GM12878 (cell line): ENCODE measurements at regions of chr10 and their contacts with region 1.

Region 1: GRCh38 chr10:34666008-34666705 is 148.9 kb downstream of the PARD3 start:
- DNase-seq: peak; percentile 53
- ATAC-seq: peak; percentile 91
- H3K4me3 ChIP-seq: no peak overlapping the region
- H3K27ac ChIP-seq: no peak overlapping the region
- H3K4me1 ChIP-seq: no peaks in the 10 kb centered on the region; the same call in 1 of the 2 replicates
- H3K27me3 ChIP-seq: no peaks in the 10 kb centered on the region
- CTCF ChIP-seq: peak; percentile 55 to 72 (median 61); a peak in 5 of 6 replicates
- EP300 ChIP-seq: no peak
- POLR2A ChIP-seq: no peak
- RAD21 ChIP-seq: peak; percentile 72

Region 2: GRCh38 chr10:34585422-34586112 is 80.6 kb before region 1 on chr10:
- CTCF ChIA-PET with region 1: no interaction called
- POLR2A ChIA-PET with region 1: no interaction called
- RAD21 ChIA-PET with region 1: no interaction called
- SMC1A ChIA-PET with region 1: no interaction called
- in situ Hi-C with region 1: no loop called
- intact Hi-C with region 1: no loop called
- DNase-seq: no peak
- ATAC-seq: peak; percentile 87
- H3K4me3 ChIP-seq: no peak overlapping the region
- H3K27ac ChIP-seq: no peak overlapping the region
- H3K4me1 ChIP-seq: no peaks in the 10 kb centered on the region
- H3K27me3 ChIP-seq: no peaks in the 10 kb centered on the region
- CTCF ChIP-seq: no peak
- EP300 ChIP-seq: 0 out of 4 replicates have a peak, but pooled peaks of 1 of the 2 experiments have one; percentile 17
- POLR2A ChIP-seq: no peak
- RAD21 ChIP-seq: no peak

Region 3: DNA sequence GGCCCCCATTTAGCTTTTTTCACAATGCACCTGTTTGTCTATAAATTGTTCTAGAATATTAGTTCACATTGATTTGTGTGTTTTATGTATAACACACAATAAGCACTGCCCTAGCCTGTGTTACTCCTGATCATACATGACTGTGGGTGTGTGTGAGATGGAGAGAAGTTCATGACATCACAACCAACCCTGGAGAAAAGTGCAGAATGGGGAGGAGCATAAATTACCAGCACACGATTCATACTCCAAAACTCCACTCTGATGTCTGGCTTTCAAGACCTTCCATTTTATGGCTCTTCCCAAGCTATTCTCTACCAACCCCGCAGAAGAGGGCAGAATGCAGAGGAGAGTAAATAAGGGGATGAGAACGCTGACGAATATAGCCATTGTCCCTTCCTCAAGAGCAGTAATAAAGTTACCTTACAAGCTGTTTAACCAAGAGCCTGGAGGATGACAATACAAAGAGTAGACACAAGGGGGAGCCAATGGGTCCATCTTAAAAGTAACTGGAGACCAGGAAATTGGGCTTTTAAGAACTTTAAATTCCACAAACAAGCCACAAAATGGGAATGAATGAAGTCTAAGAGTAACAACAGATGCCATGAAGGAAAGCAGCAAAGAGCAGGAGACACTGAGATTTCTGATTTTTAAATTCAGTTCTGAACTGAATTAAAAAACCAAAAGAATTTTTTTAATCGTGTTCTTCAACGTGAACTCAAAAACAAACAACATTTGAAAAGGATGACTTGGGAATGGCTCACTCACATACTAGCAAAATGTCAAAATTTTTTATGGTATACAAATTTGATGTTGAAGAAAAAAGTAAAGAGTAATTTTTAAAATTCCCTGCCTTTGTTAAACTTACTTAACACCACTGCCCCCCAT is 10.6 kb before region 1 on chr10:
- CTCF ChIA-PET with region 1: interaction called, 23 read pairs
- POLR2A ChIA-PET with region 1: no interaction called
- RAD21 ChIA-PET with region 1: interaction called, 3 read pairs
- SMC1A ChIA-PET with region 1: interaction called, 3 read pairs
- in situ Hi-C with region 1: no loop called
- intact Hi-C with region 1: no loop called
- DNase-seq: no peak
- ATAC-seq: peak; percentile 71
- H3K4me3 ChIP-seq: no peak overlapping the region
- H3K27ac ChIP-seq: no peak overlapping the region
- H3K4me1 ChIP-seq: no peaks in the 10 kb centered on the region
- H3K27me3 ChIP-seq: no peaks in the 10 kb centered on the region
- CTCF ChIP-seq: peak; percentile 57 to 70 (median 66)
- EP300 ChIP-seq: no peak
- POLR2A ChIP-seq: no peak
- RAD21 ChIP-seq: peak; percentile 56

Region 4: GRCh38 chr10:34815185-34816084 is 149.3 kb after region 1 on chr10 and contains the start of gene PARD3:
- CTCF ChIA-PET with region 1: interaction called, 6 read pairs
- POLR2A ChIA-PET with region 1: no interaction called
- RAD21 ChIA-PET with region 1: interaction called, 3 read pairs
- SMC1A ChIA-PET with region 1: interaction called, 3 read pairs
- in situ Hi-C with region 1: no loop called
- intact Hi-C with region 1: loop called (anchors 10 kb)
- DNase-seq: no peak
- ATAC-seq: peak; percentile 70
- H3K4me3 ChIP-seq: peak within 1 kb of the TSS; percentile 41; the same call in 1 of the 2 replicates
- H3K27ac ChIP-seq: no peak within 1 kb of the TSS
- H3K4me1 ChIP-seq: no peaks in the 10 kb centered on the region
- H3K27me3 ChIP-seq: peaks cover 0 to 15% of the 10 kb centered on the region in 2 experiments; a peak in 3 of 4 replicates
- CTCF ChIP-seq: no peak
- EP300 ChIP-seq: no peak
- POLR2A ChIP-seq: no peak
- RAD21 ChIP-seq: no peak
- polyA plus RNA-seq, gene PARD3: 6.3 to 9.6 TPM

Region 5: DNA sequence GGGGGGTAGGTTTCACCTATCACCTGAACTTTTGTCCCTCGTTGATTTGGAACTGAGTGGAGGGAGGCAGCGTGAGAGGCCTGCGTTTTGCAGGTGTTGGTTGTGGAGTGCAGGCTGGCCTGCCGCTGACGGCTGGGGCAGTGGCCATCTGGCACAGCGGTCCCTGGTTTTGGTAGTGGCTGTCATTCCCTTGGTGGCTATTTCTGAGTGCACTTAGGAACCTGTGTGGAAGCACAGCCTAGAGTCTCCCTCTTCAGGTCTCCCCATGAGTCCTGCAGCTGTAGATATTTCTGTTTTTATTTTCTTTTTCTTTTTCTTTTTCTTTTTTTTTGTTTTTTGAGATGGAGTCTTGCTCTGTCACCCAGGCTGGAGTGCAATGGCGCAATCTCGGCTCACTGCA is 294.8 kb after region 1 on chr10:
- CTCF ChIA-PET with region 1: interaction called, 10 read pairs
- POLR2A ChIA-PET with region 1: no interaction called
- RAD21 ChIA-PET with region 1: interaction called, 11 read pairs
- SMC1A ChIA-PET with region 1: interaction called, 3 read pairs
- in situ Hi-C with region 1: no loop called
- intact Hi-C with region 1: no loop called
- DNase-seq: no peak
- ATAC-seq: peak; percentile 31; the same call in 1 of the 3 replicates
- H3K4me3 ChIP-seq: no peak overlapping the region
- H3K27ac ChIP-seq: no peak overlapping the region
- H3K4me1 ChIP-seq: no peaks in the 10 kb centered on the region
- H3K27me3 ChIP-seq: no peaks in the 10 kb centered on the region; a peak in 1 of 4 replicates
- CTCF ChIP-seq: peak in 1 of 3 experiments; percentile 28; a peak in 1 of 6 replicates
- EP300 ChIP-seq: no peak
- POLR2A ChIP-seq: no peak
- RAD21 ChIP-seq: peak; percentile 36

Region 6: DNA sequence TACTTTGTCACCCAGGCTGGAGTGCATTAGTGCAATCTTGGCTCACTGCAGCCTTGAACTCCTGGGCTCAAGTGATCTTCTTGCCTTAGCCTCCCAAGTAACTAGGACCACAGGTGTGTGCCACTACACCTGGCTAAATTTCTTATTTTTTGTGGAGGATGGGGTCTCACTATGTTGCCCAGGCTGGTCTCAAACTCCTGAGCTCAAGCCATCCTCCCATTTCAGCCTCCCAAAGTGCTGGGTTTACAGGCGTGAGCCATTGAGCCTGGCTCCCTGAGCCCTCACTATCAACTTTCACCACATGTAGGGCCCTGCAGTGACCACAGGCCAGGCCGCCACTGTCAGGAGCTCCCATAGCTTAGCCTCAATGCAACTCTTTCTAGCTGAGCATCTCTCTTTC is 313.8 kb after region 1 on chr10:
- CTCF ChIA-PET with region 1: no interaction called
- POLR2A ChIA-PET with region 1: no interaction called
- RAD21 ChIA-PET with region 1: no interaction called
- SMC1A ChIA-PET with region 1: interaction called, 5 read pairs
- in situ Hi-C with region 1: no loop called
- intact Hi-C with region 1: loop called (anchors 5 kb)
- DNase-seq: no peak
- ATAC-seq: no peak
- H3K4me3 ChIP-seq: no peak overlapping the region
- H3K27ac ChIP-seq: no peak overlapping the region
- H3K4me1 ChIP-seq: no peaks in the 10 kb centered on the region
- H3K27me3 ChIP-seq: no peaks in the 10 kb centered on the region
- CTCF ChIP-seq: no peak
- EP300 ChIP-seq: no peak
- POLR2A ChIP-seq: no peak
- RAD21 ChIP-seq: no peak

Region 7: DNA sequence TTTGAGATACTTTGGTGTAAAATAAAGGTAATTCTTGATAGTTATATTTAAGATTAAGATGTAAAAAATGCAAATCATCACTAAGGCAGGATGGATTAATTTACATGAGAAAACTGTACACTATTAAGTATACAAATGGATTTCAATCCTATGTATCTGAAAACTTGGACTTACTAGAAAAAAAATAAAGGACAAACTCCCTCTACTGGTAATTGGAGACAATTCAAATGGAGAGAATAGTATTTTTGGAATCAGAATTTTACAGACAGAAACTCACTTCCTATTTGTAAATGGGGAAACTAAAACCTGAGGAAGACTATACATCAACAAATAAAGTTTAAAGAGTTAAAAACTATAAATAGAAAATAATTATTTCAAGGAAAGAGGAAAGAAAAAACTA is 361.4 kb after region 1 on chr10:
- CTCF ChIA-PET with region 1: interaction called, 13 read pairs
- POLR2A ChIA-PET with region 1: no interaction called
- RAD21 ChIA-PET with region 1: interaction called, 3 read pairs
- SMC1A ChIA-PET with region 1: interaction called, 6 read pairs
- in situ Hi-C with region 1: no loop called
- intact Hi-C with region 1: loop called (anchors 5 kb)
- DNase-seq: no peak
- ATAC-seq: no peak
- H3K4me3 ChIP-seq: no peak overlapping the region
- H3K27ac ChIP-seq: no peak overlapping the region
- H3K4me1 ChIP-seq: no peaks in the 10 kb centered on the region
- H3K27me3 ChIP-seq: no peaks in the 10 kb centered on the region
- CTCF ChIP-seq: no peak; a peak in 2 of 6 replicates
- EP300 ChIP-seq: no peak
- POLR2A ChIP-seq: no peak
- RAD21 ChIP-seq: no peak

Region 8: DNA sequence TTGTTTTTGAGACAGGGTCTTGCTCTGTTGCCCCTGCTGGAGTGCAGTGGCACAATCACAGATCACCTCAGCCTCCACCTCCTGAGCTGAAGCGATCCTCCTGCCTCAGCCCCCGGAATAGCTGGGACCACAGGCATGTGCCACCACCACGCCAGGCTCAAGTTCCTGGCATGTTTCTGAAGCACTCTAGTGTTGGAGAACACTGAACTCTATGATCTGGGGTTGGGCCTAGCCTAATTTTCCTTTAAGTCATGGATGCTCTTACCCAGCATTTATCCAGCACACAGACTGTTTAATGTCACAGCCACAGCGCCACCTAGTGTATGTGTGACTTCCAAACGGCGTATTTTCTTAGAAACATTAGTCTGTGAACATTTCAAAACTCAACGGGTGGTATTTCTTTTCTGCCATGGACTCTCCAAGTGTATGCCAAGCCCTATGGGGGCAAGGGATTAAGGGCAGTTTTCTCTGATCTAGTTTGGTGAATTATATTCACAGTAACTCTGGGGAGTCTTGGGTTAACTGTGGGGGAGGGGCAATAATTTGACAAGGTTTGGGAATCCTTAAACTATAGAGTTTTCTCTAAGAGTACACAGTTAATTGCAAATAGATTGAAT is 552.3 kb after region 1 on chr10:
- CTCF ChIA-PET with region 1: no interaction called
- POLR2A ChIA-PET with region 1: no interaction called
- RAD21 ChIA-PET with region 1: no interaction called
- SMC1A ChIA-PET with region 1: no interaction called
- in situ Hi-C with region 1: no loop called
- intact Hi-C with region 1: loop called (anchors 10 kb)
- DNase-seq: peak; percentile 59
- ATAC-seq: peak; percentile 85
- H3K4me3 ChIP-seq: no peak overlapping the region
- H3K27ac ChIP-seq: no peak overlapping the region
- H3K4me1 ChIP-seq: peaks cover 12% of the 10 kb centered on the region
- H3K27me3 ChIP-seq: no peaks in the 10 kb centered on the region
- CTCF ChIP-seq: peak; percentile 64 to 86 (median 79); a peak in 5 of 6 replicates
- EP300 ChIP-seq: no peak
- POLR2A ChIP-seq: no peak
- RAD21 ChIP-seq: peak; percentile 90